Aorta (tissue), 5 donors: ENCODE measurements at regions of chr1 and their contacts with region 1.

Region 1: GRCh38 chr1:203408486-203409427 is 57.8 kb upstream of the FMOD start:
- DNase-seq: peak; percentile 95
- ATAC-seq: peak; percentile 93
- H3K4me3 ChIP-seq: no peak overlapping the region
- H3K27ac ChIP-seq: peak overlapping the region; percentile 62 to 98
- H3K4me1 ChIP-seq: peaks cover 4 to 8% of the 10 kb centered on the region in 2 donors
- H3K27me3 ChIP-seq: no peaks in the 10 kb centered on the region

Region 2: GRCh38 chr1:203351037-203352013 is 57.4 kb before region 1 on chr1 and contains the start of gene FMOD:
- intact Hi-C with region 1: loop called in 1 of 2 experiments (anchors 2 kb)
- DNase-seq: peak; percentile 82 to 85
- ATAC-seq: peak; percentile 83
- H3K4me3 ChIP-seq: peak within 1 kb of the TSS; percentile 28 to 50
- H3K27ac ChIP-seq: peak within 1 kb of the TSS; percentile 62 to 77
- H3K4me1 ChIP-seq: peaks cover 0 to 5% of the 10 kb centered on the region in 2 donors
- H3K27me3 ChIP-seq: no peaks in the 10 kb centered on the region
- total RNA-seq, gene FMOD: 204 to 353 TPM

Region 3: DNA sequence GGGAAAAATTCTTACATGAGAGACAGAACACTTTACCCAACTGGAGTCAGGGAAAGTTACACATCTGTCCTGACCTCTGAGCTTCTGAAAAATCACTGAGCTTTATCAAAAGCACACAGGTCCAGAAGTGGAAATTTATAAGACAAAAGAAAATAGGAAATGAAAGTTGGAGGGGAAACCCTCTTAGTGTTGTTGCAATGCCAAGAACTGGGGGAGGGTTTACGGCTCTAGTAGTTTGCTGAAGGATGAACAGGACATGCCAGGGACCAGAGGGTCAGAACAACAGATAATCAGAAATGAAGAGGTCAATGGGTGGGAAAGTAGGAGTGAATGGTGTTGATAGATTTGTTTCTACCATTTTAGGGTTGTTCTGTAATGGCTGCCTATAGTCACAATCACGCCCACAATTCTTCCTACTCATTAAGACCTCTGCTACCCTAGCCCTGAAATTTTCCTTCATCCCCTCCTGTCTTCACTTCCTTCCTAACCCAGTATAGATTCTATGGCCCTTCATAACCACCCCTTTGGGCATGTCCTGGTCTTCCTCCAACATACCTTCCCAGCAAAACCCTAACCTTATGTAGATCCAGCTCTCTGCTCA is 27.5 kb before region 1 on chr1:
- intact Hi-C with region 1: loop called in 1 of 2 experiments (anchors 2 kb)
- DNase-seq: no peak
- ATAC-seq: peak; percentile 27
- H3K4me3 ChIP-seq: no peak overlapping the region
- H3K27ac ChIP-seq: peak overlapping the region in 1 of 2 donors; percentile 64
- H3K4me1 ChIP-seq: peaks cover 3 to 7% of the 10 kb centered on the region in 2 donors
- H3K27me3 ChIP-seq: no peaks in the 10 kb centered on the region

Region 4: DNA sequence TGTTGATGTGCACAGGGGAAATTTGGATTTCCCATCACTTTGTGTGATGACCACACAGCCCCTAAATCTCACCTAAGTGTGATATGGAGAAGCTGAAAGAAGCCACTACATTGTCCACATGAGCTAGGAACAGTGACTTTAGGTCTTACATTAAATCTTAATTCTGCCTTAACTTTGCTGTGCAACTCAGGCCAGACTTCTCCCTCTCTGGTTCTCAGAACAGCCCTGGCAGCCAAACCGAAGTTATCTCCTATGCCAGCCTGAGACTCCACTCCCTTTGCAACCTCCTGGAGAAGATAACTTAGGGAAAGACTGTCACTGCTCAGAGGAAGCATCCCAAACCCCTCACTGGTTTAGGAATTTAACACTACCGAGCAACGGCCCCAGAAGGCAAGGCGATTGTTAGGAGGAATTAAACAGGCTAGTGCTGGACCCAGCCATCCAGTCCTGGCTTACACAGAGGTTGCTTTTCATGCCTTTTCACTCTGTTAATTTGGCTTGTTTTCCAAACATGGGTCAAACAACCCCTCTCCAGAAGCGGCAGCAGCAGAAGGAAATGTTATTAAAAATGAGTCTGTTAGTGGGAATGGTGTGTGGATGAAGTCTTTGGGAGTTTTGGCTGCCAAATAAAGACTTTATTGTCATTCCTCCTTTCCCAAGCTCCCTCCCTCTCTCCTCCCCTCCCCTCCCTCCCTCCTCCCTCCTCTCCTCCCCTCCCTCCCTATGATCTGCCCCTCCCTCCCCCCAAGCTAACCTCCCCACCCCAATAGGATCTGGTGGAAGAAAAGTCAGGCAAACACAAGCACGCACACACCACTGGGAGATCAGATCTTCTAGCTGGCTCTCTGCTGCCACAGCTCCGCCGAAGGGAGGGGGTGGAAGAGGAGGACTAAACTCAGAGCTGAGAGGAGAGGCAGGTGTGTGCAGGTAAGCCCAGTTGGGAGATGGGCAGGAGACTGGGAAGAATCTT is 66.5 kb after region 1 on chr1 and contains the start of gene PRELP:
- intact Hi-C with region 1: loop called in 1 of 2 experiments (anchors 5 kb)
- DNase-seq: peak in 1 of 2 donors; percentile 63
- ATAC-seq: peak; percentile 80
- H3K4me3 ChIP-seq: peak within 1 kb of the TSS; percentile 45 to 90
- H3K27ac ChIP-seq: peak within 1 kb of the TSS; percentile 80 to 94
- H3K4me1 ChIP-seq: no peaks in the 10 kb centered on the region
- H3K27me3 ChIP-seq: no peaks in the 10 kb centered on the region
- total RNA-seq, gene PRELP: 174 to 217 TPM

Region 5: DNA sequence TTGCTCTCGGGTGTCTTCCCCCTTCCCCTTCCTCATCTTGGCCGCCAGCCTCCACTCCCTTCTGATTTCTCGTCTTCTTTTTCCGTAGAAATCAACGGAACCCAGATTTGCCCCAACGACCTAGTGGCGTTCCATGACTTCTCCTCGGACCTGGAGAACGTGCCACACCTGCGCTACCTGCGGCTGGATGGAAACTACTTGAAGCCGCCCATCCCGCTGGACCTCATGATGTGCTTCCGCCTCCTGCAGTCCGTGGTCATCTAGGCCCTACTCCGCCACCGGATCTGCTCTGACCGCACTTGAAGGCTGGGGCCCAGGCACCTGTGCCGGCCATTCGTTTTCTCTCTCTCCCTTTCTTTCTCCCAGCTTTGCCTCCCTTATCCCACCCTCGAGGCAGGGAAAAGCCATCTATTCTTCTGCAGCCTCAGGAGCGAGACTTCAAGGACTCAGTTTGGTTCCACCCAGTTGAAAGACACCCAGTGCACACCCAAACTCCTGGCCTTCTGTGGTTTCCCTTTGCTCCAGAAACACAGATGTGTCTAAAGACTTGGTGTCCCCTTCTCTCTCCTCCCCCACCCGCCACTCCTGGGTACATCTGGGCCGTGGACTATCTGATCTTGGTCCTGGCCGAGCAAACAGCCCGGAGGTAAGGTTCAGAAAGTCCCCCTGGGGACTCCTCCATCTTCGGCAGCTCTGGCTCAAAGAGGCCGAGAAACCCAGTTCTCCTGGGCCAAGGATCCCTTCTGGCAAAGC is 78.0 kb after region 1 on chr1:
- intact Hi-C with region 1: no loop called
- DNase-seq: no peak
- ATAC-seq: no peak
- H3K4me3 ChIP-seq: no peak overlapping the region
- H3K27ac ChIP-seq: peak overlapping the region in 1 of 2 donors; percentile 23
- H3K4me1 ChIP-seq: no peaks in the 10 kb centered on the region
- H3K27me3 ChIP-seq: no peaks in the 10 kb centered on the region